ENCODE measurements at regions of chr3 and their contacts with region 1.

Region 1: DNA sequence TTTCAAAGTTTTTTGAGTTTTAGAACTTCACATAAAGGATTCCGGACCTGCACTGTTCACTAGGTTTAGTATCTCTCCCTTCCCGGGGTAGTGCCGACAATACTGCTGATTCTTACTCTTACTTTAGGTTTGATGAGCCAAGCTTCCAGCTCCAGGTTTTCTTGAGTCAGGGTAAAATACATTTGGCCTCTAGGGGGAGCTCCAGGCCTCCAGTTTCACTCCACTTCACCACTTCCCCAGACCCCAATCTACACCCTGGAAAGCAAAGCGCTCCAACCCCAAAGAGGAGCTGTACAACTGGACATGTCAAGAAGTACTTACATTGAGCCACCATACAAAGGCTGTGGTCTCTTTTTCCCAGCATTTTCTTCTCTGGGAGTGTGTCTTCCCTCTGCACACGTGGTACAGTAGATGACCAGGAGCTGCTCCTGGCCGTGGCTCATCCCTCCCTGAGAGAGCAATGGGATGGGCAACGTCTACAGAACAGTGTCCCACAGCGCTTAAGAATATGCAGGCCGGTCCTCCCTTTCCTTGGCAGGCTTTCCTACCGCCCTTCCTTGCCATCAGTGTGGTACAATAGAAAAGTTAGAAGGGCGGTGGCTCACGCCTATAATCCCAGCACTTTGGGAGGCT is 93.9 kb upstream of the CCDC80 start:
- DNase-seq: peak; percentile 81
- H3K4me3 Mint-ChIP-seq: no peak overlapping the region
- H3K27ac Mint-ChIP-seq: no peak overlapping the region
- H3K4me1 Mint-ChIP-seq: peaks cover 14% of the 10 kb centered on the region
- H3K27me3 Mint-ChIP-seq: no peaks in the 10 kb centered on the region
- CTCF ChIP-seq: peak; percentile 72

Region 2: GRCh38 chr3:112721231-112721630 is 13.6 kb before region 1 on chr3:
- CTCF ChIA-PET with region 1: interaction called, 13 read pairs
- POLR2A ChIA-PET with region 1: no interaction called
- intact Hi-C with region 1: no loop called
- DNase-seq: no peak
- H3K4me3 Mint-ChIP-seq: no peak overlapping the region
- H3K27ac Mint-ChIP-seq: no peak overlapping the region
- H3K4me1 Mint-ChIP-seq: no peaks in the 10 kb centered on the region
- H3K27me3 Mint-ChIP-seq: no peaks in the 10 kb centered on the region
- CTCF ChIP-seq: no peak

Region 3: GRCh38 chr3:112778391-112778948 is 43.6 kb after region 1 on chr3:
- CTCF ChIA-PET with region 1: interaction called, 11 read pairs
- POLR2A ChIA-PET with region 1: interaction called, 5 read pairs
- intact Hi-C with region 1: no loop called
- DNase-seq: peak; percentile 80
- H3K4me3 Mint-ChIP-seq: no peak overlapping the region
- H3K27ac Mint-ChIP-seq: peak overlapping the region; percentile 84
- H3K4me1 Mint-ChIP-seq: peaks cover 37% of the 10 kb centered on the region
- H3K27me3 Mint-ChIP-seq: no peaks in the 10 kb centered on the region
- CTCF ChIP-seq: no peak

Region 4: GRCh38 chr3:112807685-112808084 is 72.9 kb after region 1 on chr3:
- CTCF ChIA-PET with region 1: interaction called, 126 read pairs
- POLR2A ChIA-PET with region 1: no interaction called
- intact Hi-C with region 1: no loop called
- DNase-seq: no peak
- H3K4me3 Mint-ChIP-seq: no peak overlapping the region
- H3K27ac Mint-ChIP-seq: no peak overlapping the region
- H3K4me1 Mint-ChIP-seq: peaks cover 6% of the 10 kb centered on the region
- H3K27me3 Mint-ChIP-seq: no peaks in the 10 kb centered on the region
- CTCF ChIP-seq: no peak

Region 5: GRCh38 chr3:112979240-112979832 is 244.5 kb after region 1 on chr3:
- CTCF ChIA-PET with region 1: interaction called, 47 read pairs
- POLR2A ChIA-PET with region 1: interaction called, 7 read pairs
- intact Hi-C with region 1: loop called (anchors 2 kb)
- DNase-seq: peak; percentile 56
- H3K4me3 Mint-ChIP-seq: no peak overlapping the region
- H3K27ac Mint-ChIP-seq: no peak overlapping the region
- H3K4me1 Mint-ChIP-seq: no peaks in the 10 kb centered on the region
- H3K27me3 Mint-ChIP-seq: peaks cover 20% of the 10 kb centered on the region
- CTCF ChIP-seq: peak; percentile 41

Measured in MCF 10A (cell line).